AG04449 (cell line): ENCODE measurements at regions of chr20 and their contacts with region 1.

Region 1: GRCh38 chr20:58236612-58237330 is 8.3 kb upstream of the ANKRD60 start:
- DNase-seq: no peak
- H3K4me3 ChIP-seq: peak overlapping the region; percentile 59
- CTCF ChIP-seq: peak; percentile 93

Region 2: DNA sequence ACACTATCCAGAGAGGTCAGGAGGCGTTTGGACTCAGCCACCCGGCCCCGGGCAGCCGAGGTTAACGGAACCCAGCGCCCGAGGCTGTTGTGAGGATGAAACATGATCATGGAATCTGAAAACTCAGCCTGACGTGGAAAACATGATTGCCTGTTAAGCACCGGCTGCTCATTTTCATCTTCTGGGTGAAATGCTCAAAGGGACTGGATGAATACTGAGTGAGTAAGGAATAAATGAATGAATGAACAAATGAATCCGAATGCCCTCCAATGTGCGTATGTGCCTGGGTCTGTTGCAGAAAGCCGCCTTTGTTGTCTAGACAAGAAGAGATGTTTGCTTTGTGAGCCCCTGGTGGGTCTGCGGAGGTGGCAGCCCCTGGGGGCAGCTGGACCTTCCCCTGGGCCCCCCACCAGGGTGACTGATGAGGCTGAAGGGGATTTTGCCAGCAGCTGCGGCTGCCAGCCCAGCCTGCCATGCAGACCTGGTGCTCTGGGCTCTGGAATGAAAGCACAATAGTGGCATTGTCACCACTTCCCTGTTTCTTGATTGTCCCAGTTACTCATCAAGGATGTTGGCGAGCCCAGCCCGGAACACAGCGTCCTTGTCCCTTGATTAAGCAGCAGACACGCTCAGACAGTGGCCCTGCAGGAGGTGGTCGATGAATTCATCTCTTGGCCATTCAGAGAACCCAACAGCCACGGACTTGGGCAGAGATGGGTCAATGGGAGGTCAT is 219.4 kb before region 1 on chr20:
- CTCF ChIA-PET with region 1: no interaction called
- POLR2A ChIA-PET with region 1: no interaction called
- DNase-seq: peak; percentile 4
- H3K4me3 ChIP-seq: no peak overlapping the region
- CTCF ChIP-seq: no peak

Region 3: DNA sequence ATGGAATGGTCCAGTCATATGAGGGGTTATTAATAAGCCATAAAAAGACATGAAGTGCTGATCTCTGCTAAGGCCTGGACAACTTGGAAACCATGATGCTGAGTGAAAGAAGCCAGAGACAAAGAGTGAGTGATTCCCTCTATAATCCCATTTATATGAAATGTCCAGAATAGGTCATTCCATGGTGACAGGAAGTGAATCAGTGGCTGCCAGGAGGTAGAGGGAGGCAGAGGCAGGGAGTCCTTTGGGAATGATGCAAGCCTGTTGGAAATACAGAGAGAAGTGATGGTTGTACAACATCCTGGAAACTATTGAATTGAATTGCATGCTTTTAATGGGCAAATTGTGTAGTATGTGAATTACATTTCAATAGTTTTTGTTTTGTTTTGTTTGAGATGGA is 34.7 kb before region 1 on chr20:
- CTCF ChIA-PET with region 1: no interaction called
- POLR2A ChIA-PET with region 1: no interaction called
- DNase-seq: no peak
- H3K4me3 ChIP-seq: no peak overlapping the region
- CTCF ChIP-seq: no peak

Region 4: DNA sequence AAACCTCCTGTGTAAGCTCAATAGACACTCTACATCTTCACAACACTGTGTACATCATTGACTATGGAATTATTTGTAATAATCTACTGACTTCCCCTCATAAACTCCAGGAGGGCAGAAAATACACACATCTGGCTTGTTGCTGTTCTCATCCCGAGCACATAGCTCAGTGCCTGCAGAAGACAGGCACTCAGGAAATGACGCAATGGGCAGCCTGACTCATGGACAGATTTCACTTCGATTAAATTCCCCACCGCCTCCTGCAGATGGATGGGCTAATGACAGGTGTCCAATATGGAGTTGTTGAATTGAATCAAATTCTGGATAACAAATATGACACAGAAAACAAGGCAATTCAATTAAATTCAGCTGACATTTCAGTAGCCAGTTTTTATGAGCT is 17.5 kb before region 1 on chr20:
- CTCF ChIA-PET with region 1: interaction called, 96 read pairs
- POLR2A ChIA-PET with region 1: no interaction called
- DNase-seq: peak; percentile 57
- H3K4me3 ChIP-seq: no peak overlapping the region; the same call in 1 of the 2 replicates
- CTCF ChIP-seq: no peak

Region 5: GRCh38 chr20:58659841-58660240 is 423.1 kb after region 1 on chr20:
- CTCF ChIA-PET with region 1: interaction called, 14 read pairs
- POLR2A ChIA-PET with region 1: no interaction called
- DNase-seq: no peak
- H3K4me3 ChIP-seq: no peak overlapping the region
- CTCF ChIP-seq: no peak

Region 6: DNA sequence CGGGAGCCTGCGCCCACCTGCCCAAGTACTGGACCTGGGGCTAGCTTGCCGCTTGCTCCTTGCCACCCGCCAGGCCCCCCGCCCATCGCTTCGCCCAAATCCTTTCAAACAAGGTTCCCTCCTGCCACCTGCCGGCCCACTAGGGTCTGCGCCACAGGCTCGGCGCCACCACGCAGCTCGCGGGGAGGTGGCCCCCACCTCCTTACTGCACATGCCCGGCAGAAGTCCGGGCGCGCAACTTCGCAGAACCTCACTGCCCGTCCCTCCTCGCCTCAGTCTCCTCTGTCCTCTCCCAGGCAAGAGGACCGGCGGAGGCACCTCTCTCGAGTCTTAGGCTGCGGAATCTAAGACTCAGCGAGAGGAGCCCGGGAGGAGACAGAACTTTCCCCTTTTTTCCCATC is 602.7 kb after region 1 on chr20:
- CTCF ChIA-PET with region 1: interaction called, 23 read pairs
- POLR2A ChIA-PET with region 1: no interaction called
- DNase-seq: no peak
- H3K4me3 ChIP-seq: peak overlapping the region; percentile 36
- CTCF ChIP-seq: peak; percentile 61